ENCODE measurements at regions of chr14 and their contacts with region 1.

Region 1: GRCh38 chr14:90697577-90698206 is 118.5 kb downstream of the TTC7B start:
- DNase-seq: no peak
- H3K4me3 ChIP-seq: no peak overlapping the region
- H3K27me3 ChIP-seq: no peaks in the 10 kb centered on the region
- CTCF ChIP-seq: peak; percentile 96

Region 2: GRCh38 chr14:90288651-90289355 is 408.9 kb before region 1 on chr14:
- CTCF ChIA-PET with region 1: interaction called, 11 read pairs
- POLR2A ChIA-PET with region 1: no interaction called
- DNase-seq: no peak
- H3K4me3 ChIP-seq: no peak overlapping the region
- H3K27me3 ChIP-seq: no peaks in the 10 kb centered on the region
- CTCF ChIP-seq: no peak

Region 3: GRCh38 chr14:90301668-90302090 is 396.0 kb before region 1 on chr14:
- CTCF ChIA-PET with region 1: interaction called, 33 read pairs
- POLR2A ChIA-PET with region 1: no interaction called
- DNase-seq: no peak
- H3K4me3 ChIP-seq: no peak overlapping the region
- H3K27me3 ChIP-seq: no peaks in the 10 kb centered on the region
- CTCF ChIP-seq: peak; percentile 57

Region 4: GRCh38 chr14:90399541-90400444 is 297.9 kb before region 1 on chr14:
- CTCF ChIA-PET with region 1: interaction called, 35 read pairs
- POLR2A ChIA-PET with region 1: no interaction called
- DNase-seq: no peak
- H3K4me3 ChIP-seq: no peak overlapping the region
- H3K27me3 ChIP-seq: no peaks in the 10 kb centered on the region
- CTCF ChIP-seq: peak; percentile 99

Region 5: GRCh38 chr14:90409209-90409730 is 288.4 kb before region 1 on chr14:
- CTCF ChIA-PET with region 1: interaction called, 30 read pairs
- POLR2A ChIA-PET with region 1: no interaction called
- DNase-seq: peak; percentile 88
- H3K4me3 ChIP-seq: no peak overlapping the region
- H3K27me3 ChIP-seq: no peaks in the 10 kb centered on the region
- CTCF ChIP-seq: no peak

Region 6: DNA sequence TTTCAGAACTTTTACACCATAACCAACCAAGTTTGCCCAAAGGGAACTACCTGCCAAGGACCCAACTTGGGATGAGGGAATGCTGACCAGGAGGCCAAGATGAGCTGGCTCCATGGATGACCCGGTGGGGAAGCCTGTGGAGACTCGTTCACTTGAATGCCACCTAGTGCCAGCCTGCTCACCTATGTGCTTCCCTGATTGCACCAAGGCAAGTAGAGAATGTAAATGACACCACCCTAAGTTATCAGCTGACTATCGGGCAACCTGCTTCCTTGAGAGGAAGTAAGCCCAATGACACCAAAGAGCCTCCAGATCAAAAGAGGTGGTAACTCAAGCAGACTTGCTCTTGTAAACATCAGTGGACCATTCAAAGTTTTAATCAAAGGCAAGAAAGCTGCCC is 18.8 kb before region 1 on chr14:
- CTCF ChIA-PET with region 1: interaction called, 13 read pairs
- POLR2A ChIA-PET with region 1: no interaction called
- DNase-seq: no peak
- H3K4me3 ChIP-seq: no peak overlapping the region
- H3K27me3 ChIP-seq: no peaks in the 10 kb centered on the region
- CTCF ChIP-seq: no peak

Measured in BJ (cell line).